ENCODE measurements at regions of chr2 and their contacts with region 1.

Region 1: GRCh38 chr2:45611020-45611737 is at the start of gene SRBD1:
- DNase-seq: peak; percentile 97
- H3K4me3 Mint-ChIP-seq: peak within 1 kb of the TSS; percentile 97
- H3K27ac Mint-ChIP-seq: peak within 1 kb of the TSS; percentile 95
- H3K4me1 Mint-ChIP-seq: peaks cover 16% of the 10 kb centered on the region
- H3K27me3 Mint-ChIP-seq: no peaks in the 10 kb centered on the region
- total RNA-seq, gene SRBD1: 14.5 and 18.9 TPM in 2 replicates

Region 2: GRCh38 chr2:45650851-45651414 is 39.8 kb after region 1 on chr2:
- intact Hi-C with region 1: loop called (anchors 2 kb)
- DNase-seq: peak; percentile 98
- H3K4me3 Mint-ChIP-seq: peak overlapping the region; percentile 100
- H3K27ac Mint-ChIP-seq: peak overlapping the region; percentile 100
- H3K4me1 Mint-ChIP-seq: peaks cover 28% of the 10 kb centered on the region
- H3K27me3 Mint-ChIP-seq: peaks cover 15% of the 10 kb centered on the region